Activated T-helper 1 cell treated with anti-CD3 and anti-CD28 coated beads, Interleukin-12 subunit alpha, Interleukin-12 subunit beta, Interleukin-2, Interleukin-4 antibody, amounts not matched to agents 30 ng/mL and 10 ng/mL and 1 ng/mL, durations not matched to agents 14 hours and 24 hours and 36 hours (primary cell): ENCODE measurements at regions of chr12 and their contacts with region 1.

Region 1: GRCh38 chr12:55926738-55927587 is 731 bp downstream of the PYM1 start:
- DNase-seq: peak; percentile 85
- H3K4me3 Mint-ChIP-seq: peak overlapping the region; percentile 90
- H3K27ac Mint-ChIP-seq: peak overlapping the region; percentile 96
- H3K4me1 Mint-ChIP-seq: peaks cover 52% of the 10 kb centered on the region
- H3K27me3 Mint-ChIP-seq: no peaks in the 10 kb centered on the region

Region 2: DNA sequence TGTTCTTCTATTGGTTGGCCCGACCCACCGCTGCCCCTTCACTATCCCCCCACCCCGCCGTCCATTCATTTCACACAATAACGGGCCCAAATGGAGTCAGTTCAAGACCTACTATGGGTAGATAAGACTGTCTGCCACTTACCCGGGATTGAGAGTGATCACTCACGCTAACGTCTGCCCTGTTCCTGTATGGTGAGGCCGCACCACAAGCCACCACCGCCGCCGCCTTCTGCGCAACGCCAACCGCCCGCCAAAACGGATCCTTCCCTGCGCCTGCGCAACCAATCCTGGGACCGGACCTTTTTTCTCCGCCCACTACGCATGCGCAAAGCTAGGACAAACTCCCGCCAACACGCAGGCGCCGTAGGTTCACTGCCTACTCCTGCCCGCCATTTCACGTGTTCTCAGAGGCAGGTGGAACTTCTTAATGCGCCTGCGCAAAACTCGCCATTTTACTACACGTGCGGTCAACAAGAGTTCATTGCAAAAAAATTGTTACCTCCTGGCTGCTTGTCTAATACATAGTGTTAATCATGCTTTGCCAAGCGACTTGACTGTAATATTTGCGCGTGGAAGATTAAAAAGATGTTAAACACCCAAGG is 1647.0 kb before region 1 on chr12 and contains the start of gene CBX5:
- intact Hi-C with region 1: loop called (anchors 10 kb)
- DNase-seq: peak; percentile 99
- H3K4me3 Mint-ChIP-seq: no peak within 1 kb of the TSS
- H3K27ac Mint-ChIP-seq: no peak within 1 kb of the TSS
- H3K4me1 Mint-ChIP-seq: peaks cover 59% of the 10 kb centered on the region
- H3K27me3 Mint-ChIP-seq: no peaks in the 10 kb centered on the region
- total RNA-seq, gene CBX5: 99.8 and 106 TPM in 2 replicates

Region 3: DNA sequence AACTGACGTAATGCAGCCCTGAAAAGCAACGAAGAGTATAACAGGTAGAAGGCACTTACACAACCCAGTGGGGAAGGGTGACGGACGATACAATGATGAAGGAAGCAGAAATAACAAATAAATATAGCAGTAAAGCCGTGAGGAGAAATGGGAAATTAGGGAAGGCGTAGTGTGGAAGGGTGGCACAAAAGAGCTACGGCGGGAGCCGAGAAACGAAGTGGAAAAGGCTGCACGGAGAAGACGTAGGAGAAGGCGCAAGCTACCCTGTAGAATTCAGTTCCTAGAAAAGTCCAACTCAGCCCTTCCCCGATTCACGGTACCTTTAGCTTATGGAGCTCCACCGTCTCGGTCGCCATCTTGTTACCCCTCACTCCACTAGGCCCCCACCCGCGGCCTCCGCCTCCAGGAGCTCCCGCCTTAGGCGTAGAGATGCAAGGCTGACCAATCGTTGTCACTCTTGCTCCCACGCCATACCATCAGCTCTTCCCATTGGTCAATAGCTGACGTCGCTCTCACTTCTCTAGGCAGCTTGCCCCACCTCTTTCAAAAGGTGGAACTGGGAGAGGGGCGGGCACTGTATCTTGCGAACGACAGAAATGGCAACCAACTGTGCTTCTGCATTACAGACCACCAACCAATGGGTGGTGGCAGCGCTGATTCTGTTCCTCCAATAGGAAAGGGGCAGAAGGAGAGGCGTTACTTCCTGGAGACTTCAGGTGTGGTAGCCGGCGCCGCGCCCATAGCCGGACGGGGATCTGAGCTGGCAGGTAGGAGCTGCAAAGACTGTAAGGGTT is 109.4 kb before region 1 on chr12 and contains the starts of genes ORMDL2 and SARNP:
- intact Hi-C with region 1: loop called (anchors 1 kb)
- DNase-seq: peak; percentile 97
- H3K4me3 Mint-ChIP-seq: no peak within 1 kb of the TSS
- H3K27ac Mint-ChIP-seq: no peak within 1 kb of the TSS
- H3K4me1 Mint-ChIP-seq: peaks cover 33% of the 10 kb centered on the region
- H3K27me3 Mint-ChIP-seq: no peaks in the 10 kb centered on the region
- total RNA-seq, gene ORMDL2: 58.9 and 61.2 TPM in 2 replicates
- total RNA-seq, gene SARNP: 70.7 and 75.1 TPM in 2 replicates

Region 4: DNA sequence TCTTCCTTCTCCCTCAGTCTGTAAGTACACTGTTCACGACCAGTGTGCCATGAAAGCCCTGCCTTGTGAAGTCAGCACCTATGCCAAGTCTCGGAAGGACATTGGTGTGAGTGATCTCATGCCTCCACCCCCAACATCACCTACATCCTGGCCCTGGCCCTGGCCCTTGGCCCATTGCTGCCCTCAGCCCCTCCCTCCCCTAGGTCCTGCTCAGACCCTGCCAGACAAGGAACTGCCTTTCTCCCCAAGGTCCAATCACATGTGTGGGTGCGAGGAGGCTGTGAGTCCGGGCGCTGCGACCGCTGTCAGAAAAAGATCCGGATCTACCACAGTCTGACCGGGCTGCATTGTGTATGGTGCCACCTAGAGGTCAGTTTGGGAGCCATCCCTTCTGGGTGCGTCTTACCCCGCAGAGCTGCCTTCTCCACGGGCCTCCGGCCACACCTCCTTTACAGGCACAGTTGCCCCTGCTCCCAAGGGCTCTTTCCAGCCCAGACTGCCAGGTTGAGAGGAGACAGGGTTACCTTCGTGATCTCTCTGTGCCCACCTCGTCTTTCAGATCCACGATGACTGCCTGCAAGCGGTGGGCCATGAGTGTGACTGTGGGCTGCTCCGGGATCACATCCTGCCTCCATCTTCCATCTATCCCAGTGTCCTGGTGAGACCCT is 13.2 kb after region 1 on chr12:
- intact Hi-C with region 1: loop called (anchors 1 kb)
- DNase-seq: peak; percentile 76
- H3K4me3 Mint-ChIP-seq: peak overlapping the region; percentile 9
- H3K27ac Mint-ChIP-seq: peak overlapping the region; percentile 18
- H3K4me1 Mint-ChIP-seq: peaks cover 56% of the 10 kb centered on the region
- H3K27me3 Mint-ChIP-seq: no peaks in the 10 kb centered on the region

Region 5: DNA sequence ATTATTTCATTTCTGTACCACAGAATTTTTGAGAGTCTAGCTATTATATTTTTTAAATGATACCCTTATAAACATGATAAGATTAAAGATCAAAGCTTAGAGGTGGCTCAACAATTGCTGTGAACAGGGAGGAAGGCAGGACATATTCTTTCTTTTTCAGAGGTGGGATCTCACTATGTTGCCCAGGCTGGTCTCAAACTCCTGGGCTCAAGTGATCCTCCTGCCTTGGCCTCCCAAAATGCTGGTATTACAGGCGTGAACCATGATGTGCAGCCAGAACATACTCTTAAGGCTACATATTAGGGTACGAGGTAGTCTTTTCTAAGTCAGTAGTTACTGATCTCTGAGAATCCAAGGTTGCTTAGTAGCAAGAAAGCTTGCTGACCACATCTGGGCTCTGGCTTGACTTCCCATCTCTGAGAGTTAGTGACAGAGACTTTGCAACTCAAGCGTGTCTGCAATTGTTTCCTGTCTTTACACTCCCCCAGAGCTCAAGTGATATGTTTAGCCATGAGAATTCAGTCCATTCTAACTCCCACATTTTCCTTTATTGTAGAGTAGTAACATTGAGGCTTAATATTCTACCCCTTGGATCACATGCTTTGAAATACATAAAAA is 55.5 kb after region 1 on chr12:
- intact Hi-C with region 1: no loop called
- DNase-seq: no peak
- H3K4me3 Mint-ChIP-seq: no peak overlapping the region
- H3K27ac Mint-ChIP-seq: no peak overlapping the region
- H3K4me1 Mint-ChIP-seq: peaks cover 6% of the 10 kb centered on the region
- H3K27me3 Mint-ChIP-seq: no peaks in the 10 kb centered on the region

Region 6: GRCh38 chr12:56041552-56042429 is 114.8 kb after region 1 on chr12 and contains the start of gene RPS26:
- intact Hi-C with region 1: loop called (anchors 1 kb)
- DNase-seq: peak; percentile 90
- H3K4me3 Mint-ChIP-seq: peak within 1 kb of the TSS; percentile 97
- H3K27ac Mint-ChIP-seq: peak within 1 kb of the TSS; percentile 97
- H3K4me1 Mint-ChIP-seq: peaks cover 49% of the 10 kb centered on the region
- H3K27me3 Mint-ChIP-seq: no peaks in the 10 kb centered on the region
- total RNA-seq, gene RPS26: 35.4 and 38.2 TPM in 2 replicates

Region 7: GRCh38 chr12:57078519-57079404 is 1151.8 kb after region 1 on chr12 and contains the start of gene NEMP1:
- intact Hi-C with region 1: loop called (anchors 5 kb)
- DNase-seq: peak; percentile 97
- H3K4me3 Mint-ChIP-seq: peak within 1 kb of the TSS; percentile 89
- H3K27ac Mint-ChIP-seq: peak within 1 kb of the TSS; percentile 92
- H3K4me1 Mint-ChIP-seq: peaks cover 16% of the 10 kb centered on the region
- H3K27me3 Mint-ChIP-seq: no peaks in the 10 kb centered on the region
- total RNA-seq, gene NEMP1: 70.2 and 71.7 TPM in 2 replicates